Vagina (tissue), 2 donors: ENCODE measurements at regions of chr7 and their contacts with region 1.

Region 1: GRCh38 chr7:48168159-48168558 is 3.1 kb upstream of the ABCA13 start:
- DNase-seq: no peak
- H3K4me3 ChIP-seq: no peak overlapping the region
- H3K27ac ChIP-seq: no peak overlapping the region
- H3K4me1 ChIP-seq: no peaks in the 10 kb centered on the region
- H3K27me3 ChIP-seq: no peaks in the 10 kb centered on the region
- CTCF ChIP-seq: no peak
- POLR2A ChIP-seq: no peak

Region 2: DNA sequence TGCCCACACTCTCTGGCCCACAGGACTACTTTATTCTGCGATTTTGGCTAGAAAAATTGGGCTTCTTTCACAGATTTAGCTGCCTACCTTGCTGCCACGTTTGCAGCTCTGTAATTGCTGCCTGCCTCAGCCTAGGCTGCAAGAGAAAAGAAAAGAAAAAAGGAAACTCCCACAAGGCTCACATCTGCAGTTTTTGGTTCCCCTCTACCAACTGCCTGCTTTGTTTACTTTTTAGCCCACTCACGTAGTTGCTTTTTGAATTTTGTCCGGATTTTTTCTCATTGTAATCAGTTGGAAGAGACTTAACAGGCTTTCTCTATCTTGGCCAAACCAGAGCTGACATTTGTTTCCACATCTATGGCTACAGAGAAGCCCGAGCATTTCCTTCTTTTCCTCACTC is 163.5 kb before region 1 on chr7:
- intact Hi-C with region 1: no loop called
- DNase-seq: no peak
- H3K4me3 ChIP-seq: no peak overlapping the region
- H3K27ac ChIP-seq: no peak overlapping the region
- H3K4me1 ChIP-seq: no peaks in the 10 kb centered on the region
- H3K27me3 ChIP-seq: no peaks in the 10 kb centered on the region
- CTCF ChIP-seq: no peak
- POLR2A ChIP-seq: no peak

Region 3: GRCh38 chr7:48182718-48183369 is 14.7 kb after region 1 on chr7:
- intact Hi-C with region 1: no loop called
- DNase-seq: no peak
- H3K4me3 ChIP-seq: no peak overlapping the region
- H3K27ac ChIP-seq: no peak overlapping the region
- H3K4me1 ChIP-seq: no peaks in the 10 kb centered on the region
- H3K27me3 ChIP-seq: no peaks in the 10 kb centered on the region
- CTCF ChIP-seq: no peak
- POLR2A ChIP-seq: no peak

Region 4: GRCh38 chr7:49580761-49581160 is 1412.6 kb after region 1 on chr7:
- intact Hi-C with region 1: loop called (anchors 5 kb)
- DNase-seq: no peak
- H3K4me3 ChIP-seq: no peak overlapping the region
- H3K27ac ChIP-seq: no peak overlapping the region
- H3K4me1 ChIP-seq: no peaks in the 10 kb centered on the region
- H3K27me3 ChIP-seq: no peaks in the 10 kb centered on the region
- CTCF ChIP-seq: no peak
- POLR2A ChIP-seq: no peak